Activated CD8-positive, alpha-beta memory T cell treated with anti-CD3 and anti-CD28 coated beads, Interleukin-2, amount 10 ng/mL, durations not matched to agents 7 days and 5 days (primary cell): ENCODE measurements at regions of chr11 and their contacts with region 1.

Region 1: DNA sequence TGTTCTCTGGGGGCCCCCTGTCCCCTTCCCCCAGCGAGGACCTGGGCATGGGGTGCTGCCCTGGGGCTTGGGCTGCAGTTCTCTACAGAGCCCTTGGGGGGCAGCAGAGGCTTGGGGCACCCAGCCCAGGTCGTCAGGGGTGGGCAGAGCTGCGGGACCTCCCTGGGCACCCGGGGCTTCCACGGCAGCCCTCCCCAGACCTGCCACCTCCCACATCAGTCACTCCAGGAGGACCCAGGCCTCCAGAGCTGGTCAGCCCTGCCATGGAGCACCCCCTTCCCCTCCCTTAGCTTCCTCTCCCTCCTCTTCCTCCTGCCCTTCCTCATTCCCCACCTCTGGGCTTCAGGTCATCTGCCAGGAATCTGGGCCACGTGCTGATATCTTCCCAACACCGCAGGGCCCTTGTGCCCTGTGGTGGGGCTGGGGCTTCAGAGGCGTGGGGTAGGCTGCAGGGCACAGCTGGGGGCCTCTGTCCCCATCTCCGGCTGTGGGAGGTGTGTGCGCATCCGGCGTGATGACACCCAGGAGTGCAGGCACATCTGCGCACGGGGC is 5.8 kb downstream of the TSPAN4 start:
- DNase-seq: peak; percentile 74
- ATAC-seq: peak; percentile 81
- H3K4me3 Mint-ChIP-seq: no peak overlapping the region
- H3K27ac Mint-ChIP-seq: no peak overlapping the region
- H3K4me1 Mint-ChIP-seq: peaks cover 13% of the 10 kb centered on the region
- H3K27me3 Mint-ChIP-seq: peaks cover 13% of the 10 kb centered on the region

Region 2: DNA sequence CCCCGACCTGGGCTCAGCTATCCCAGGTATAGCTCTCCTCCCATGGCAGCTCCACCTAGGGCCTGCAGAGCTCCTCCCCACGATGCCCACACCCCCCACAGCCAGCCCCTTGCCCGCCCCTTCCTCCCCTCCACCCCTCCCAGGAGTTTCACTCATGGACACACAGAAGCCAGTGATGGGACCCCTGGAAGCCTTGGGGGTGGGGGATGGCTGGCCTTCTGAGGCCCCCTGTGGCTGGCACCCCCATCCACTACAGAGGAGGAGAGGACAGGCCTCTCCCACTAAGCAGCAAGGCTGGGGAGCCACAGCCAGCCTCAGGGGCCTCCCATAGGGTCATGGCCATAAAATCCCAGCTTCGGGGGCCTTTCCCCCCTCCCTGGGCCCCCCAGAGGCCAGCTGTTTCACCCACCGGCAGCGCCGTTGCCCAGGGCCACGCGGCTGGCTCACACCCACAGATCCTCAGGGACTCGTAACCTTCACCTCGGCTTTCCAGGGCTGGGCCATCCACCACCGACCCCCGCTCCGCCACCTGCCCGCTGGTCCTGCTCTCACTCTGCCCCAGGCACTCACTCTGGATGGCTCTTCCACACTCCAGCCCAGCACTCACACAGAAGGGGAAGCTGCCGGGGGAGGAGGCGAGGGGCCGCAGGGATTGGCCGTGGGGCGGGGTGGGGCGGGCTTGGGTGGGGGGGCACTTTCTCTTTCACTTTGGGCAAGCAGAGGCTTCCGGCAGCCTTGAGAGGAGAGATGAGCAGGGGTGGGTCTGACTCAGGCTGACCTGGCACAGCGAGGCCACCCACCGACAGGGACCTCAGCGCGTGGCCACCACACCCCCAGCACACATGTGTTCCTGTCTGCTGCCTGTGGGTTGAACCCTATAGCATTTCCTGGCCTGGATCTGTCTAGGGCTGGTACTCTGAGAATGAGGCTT is 52.6 kb before region 1 on chr11:
- CTCF ChIA-PET with region 1: no interaction called
- DNase-seq: peak; percentile 92
- ATAC-seq: peak; percentile 55
- H3K4me3 Mint-ChIP-seq: peak overlapping the region; percentile 85
- H3K27ac Mint-ChIP-seq: peak overlapping the region; percentile 84
- H3K4me1 Mint-ChIP-seq: peaks cover 13% of the 10 kb centered on the region
- H3K27me3 Mint-ChIP-seq: no peaks in the 10 kb centered on the region

Region 3: DNA sequence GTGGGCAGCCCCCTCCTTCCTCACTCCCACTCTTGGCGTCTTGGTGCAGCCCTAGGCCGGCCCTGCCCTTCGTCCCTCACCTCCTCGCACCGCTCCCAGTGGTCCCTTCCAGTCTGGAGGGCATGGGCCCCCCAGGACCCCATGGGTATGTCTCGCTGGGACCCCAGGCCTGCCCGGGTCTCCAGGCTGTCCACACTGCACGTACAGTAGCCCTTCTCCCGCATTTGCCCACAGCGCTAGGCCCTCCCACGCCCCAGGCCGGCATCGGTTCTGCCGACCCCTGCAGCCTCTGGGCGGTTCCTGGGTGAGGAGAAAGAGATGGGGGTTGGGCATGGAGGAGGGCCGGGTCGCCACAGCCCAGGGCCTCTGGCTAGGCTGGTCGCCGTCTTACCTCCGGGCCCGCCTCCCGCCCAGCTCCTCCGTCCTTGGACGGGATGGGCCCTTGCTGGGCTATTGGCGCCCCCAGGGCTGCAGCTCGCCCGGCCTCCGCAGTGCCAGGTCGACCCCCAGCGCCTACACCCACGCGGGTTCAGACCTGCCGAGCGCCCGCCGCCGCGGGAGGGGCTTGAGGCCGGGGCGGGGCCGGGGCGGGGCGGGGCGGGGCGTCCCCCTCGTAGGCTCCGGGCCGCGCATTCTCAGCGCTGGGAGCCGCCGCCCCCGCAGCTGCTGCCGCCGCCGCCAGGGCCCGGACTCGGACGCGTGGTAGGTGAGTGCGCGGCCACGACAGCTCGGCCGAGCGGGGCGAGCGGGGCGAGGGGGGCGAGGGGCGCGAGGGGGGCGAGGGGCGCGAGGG is 15.9 kb before region 1 on chr11 and contains the start of gene CD151:
- CTCF ChIA-PET with region 1: interaction called, 13 read pairs
- DNase-seq: peak; percentile 51
- ATAC-seq: peak; percentile 63
- H3K4me3 Mint-ChIP-seq: peak within 1 kb of the TSS; percentile 48
- H3K27ac Mint-ChIP-seq: no peak within 1 kb of the TSS
- H3K4me1 Mint-ChIP-seq: peaks cover 32% of the 10 kb centered on the region
- H3K27me3 Mint-ChIP-seq: peaks cover 42% of the 10 kb centered on the region
- total RNA-seq, gene CD151: 23.1 to 54.9 TPM

Region 4: DNA sequence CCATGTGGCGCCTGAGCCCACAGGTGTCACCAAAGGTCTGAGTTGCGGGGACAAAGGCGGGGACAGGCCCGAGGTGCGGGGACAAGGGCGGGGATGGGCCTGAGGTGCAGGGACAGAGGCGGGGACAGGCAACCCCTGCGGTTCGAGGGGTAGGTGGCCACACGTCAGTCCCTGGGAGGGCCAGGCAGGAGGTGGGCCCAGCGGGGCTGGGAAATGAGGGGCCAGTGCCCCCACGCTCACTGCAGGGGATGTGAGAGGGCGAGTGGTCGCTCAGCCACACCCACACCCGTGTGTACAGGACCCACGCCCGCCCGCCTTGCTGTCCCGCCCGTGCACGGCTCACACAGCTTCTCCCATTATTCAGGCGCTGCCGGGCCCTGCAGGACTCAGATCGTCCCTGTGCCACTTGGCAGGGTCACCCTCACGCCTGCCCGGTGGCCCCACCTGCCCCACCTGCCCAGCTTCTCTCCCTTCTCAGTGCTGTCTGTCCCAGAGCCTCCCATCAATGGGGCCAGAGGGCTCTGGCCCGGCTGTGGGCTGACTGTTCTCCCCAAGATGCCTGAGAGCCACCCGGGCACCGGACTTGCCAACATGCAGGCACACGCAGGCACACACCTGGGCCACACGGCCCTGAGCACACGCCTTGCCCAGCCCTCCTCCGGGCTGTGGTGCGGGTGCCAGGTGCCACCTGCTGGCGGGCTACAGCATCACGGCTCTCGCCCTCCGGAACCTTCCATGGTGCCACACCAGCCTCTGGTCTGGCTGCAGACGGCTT is 202.3 kb after region 1 on chr11:
- CTCF ChIA-PET with region 1: interaction called, 41 read pairs
- DNase-seq: peak; percentile 78
- ATAC-seq: peak; percentile 98
- H3K4me3 Mint-ChIP-seq: no peak overlapping the region
- H3K27ac Mint-ChIP-seq: no peak overlapping the region
- H3K4me1 Mint-ChIP-seq: no peaks in the 10 kb centered on the region
- H3K27me3 Mint-ChIP-seq: peaks cover 4% of the 10 kb centered on the region